ENCODE measurements at regions of chr1 and their contacts with region 1.

Region 1: DNA sequence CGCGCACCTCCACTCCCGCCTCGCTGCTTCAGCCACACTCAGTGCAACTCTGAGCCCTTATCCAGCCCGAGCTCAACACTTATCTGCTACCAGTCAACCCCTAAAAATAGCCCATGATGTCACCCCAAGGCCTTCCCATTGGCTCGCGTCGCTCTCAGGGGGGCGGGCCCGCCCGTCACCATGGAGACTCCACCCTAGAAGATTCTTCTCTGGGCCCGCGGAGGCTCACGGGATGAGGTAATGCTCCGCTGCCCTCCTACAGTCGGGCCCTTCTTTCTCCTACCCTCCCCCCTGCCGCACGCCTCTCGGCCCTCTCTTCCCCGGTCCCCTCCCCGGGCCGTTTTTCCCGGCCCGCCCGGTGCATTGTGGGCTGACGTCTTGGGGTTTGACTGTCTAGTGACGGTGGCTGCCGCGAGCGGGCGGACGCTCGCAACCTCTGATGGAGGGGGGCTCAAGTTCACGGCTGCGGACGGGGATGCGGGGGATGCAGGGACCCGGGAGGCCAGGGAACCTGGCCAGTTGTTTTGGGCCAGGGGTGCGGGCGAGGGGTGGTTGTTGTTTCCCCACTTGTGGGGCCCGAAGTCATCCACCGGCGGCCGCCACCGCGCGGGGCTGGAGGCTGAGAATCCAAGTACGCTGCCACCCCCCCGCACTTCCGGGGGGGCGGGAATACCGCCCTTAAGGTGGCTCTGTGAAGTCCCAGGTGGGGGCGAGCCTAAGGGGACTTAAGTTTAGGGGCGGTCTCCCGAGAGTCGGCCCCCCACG is at the start of gene JUN:
- DNase-seq: peak; percentile 99 to 100
- ATAC-seq: peak; percentile 85 to 95 (median 89)
- H3K4me3 ChIP-seq: peak within 1 kb of the TSS; percentile 74 to 97 (median 94)
- H3K27ac ChIP-seq: peak within 1 kb of the TSS; percentile 98 to 100 (median 100)
- H3K4me1 ChIP-seq: peaks cover 0 to 33% (median 22%) of the 10 kb centered on the region in 9 donors
- H3K27me3 ChIP-seq: no peaks in the 10 kb centered on the region
- CTCF ChIP-seq: peak in 3 of 9 donors; percentile 32 to 37 (median 34)
- total RNA-seq, gene JUN: 47.0 to 209 (median 78.8) TPM

Region 2: GRCh38 chr1:58432851-58433668 is 351.1 kb before region 1 on chr1:
- intact Hi-C with region 1: no loop called
- DNase-seq: no peak
- ATAC-seq: peak in 4 of 8 donors; percentile 24 to 67 (median 51)
- H3K4me3 ChIP-seq: no peak overlapping the region
- H3K27ac ChIP-seq: no peak overlapping the region
- H3K4me1 ChIP-seq: peaks cover 0 to 27% (median 4%) of the 10 kb centered on the region in 9 donors
- H3K27me3 ChIP-seq: no peaks in the 10 kb centered on the region
- CTCF ChIP-seq: no peak

Region 3: GRCh38 chr1:58739856-58740466 is 44.2 kb before region 1 on chr1:
- intact Hi-C with region 1: loop called in 1 of 10 experiments (anchors 5 kb)
- DNase-seq: peak in 1 of 2 donors; percentile 52
- ATAC-seq: peak in 6 of 8 donors; percentile 49 to 76 (median 64)
- H3K4me3 ChIP-seq: no peak overlapping the region
- H3K27ac ChIP-seq: no peak overlapping the region
- H3K4me1 ChIP-seq: peaks cover 0 to 24% (median 3%) of the 10 kb centered on the region in 9 donors
- H3K27me3 ChIP-seq: no peaks in the 10 kb centered on the region
- CTCF ChIP-seq: peak; percentile 73 to 95 (median 86)

Region 4: GRCh38 chr1:58982259-58982998 is 198.3 kb after region 1 on chr1:
- intact Hi-C with region 1: loop called in 2 of 10 experiments (anchors 2 to 5 kb)
- DNase-seq: peak; percentile 34 to 40
- ATAC-seq: peak; percentile 39 to 97 (median 84)
- H3K4me3 ChIP-seq: no peak overlapping the region
- H3K27ac ChIP-seq: peak overlapping the region in 9 of 10 donors; percentile 24 to 68 (median 52)
- H3K4me1 ChIP-seq: peaks cover 5 to 34% (median 27%) of the 10 kb centered on the region in 9 donors
- H3K27me3 ChIP-seq: no peaks in the 10 kb centered on the region
- CTCF ChIP-seq: no peak

Region 5: GRCh38 chr1:59076612-59077011 is 292.4 kb after region 1 on chr1:
- intact Hi-C with region 1: loop called in 1 of 10 experiments (anchors 10 kb)
- DNase-seq: no peak
- ATAC-seq: peak in 1 of 8 donors; percentile 33
- H3K4me3 ChIP-seq: no peak overlapping the region
- H3K27ac ChIP-seq: no peak overlapping the region
- H3K4me1 ChIP-seq: peaks cover 0 to 29% (median 8%) of the 10 kb centered on the region in 9 donors
- H3K27me3 ChIP-seq: no peaks in the 10 kb centered on the region
- CTCF ChIP-seq: peak in 6 of 9 donors; percentile 12 to 46 (median 31)

Region 6: GRCh38 chr1:59290193-59290947 is 506.2 kb after region 1 on chr1:
- intact Hi-C with region 1: loop called in 3 of 10 experiments (anchors 5 to 10 kb)
- DNase-seq: peak in 1 of 2 donors; percentile 15
- ATAC-seq: peak in 7 of 8 donors; percentile 18 to 74 (median 50)
- H3K4me3 ChIP-seq: no peak overlapping the region
- H3K27ac ChIP-seq: peak overlapping the region in 1 of 10 donors; percentile 91
- H3K4me1 ChIP-seq: peaks cover 0 to 43% (median 5%) of the 10 kb centered on the region in 9 donors
- H3K27me3 ChIP-seq: no peaks in the 10 kb centered on the region
- CTCF ChIP-seq: peak in 7 of 9 donors; percentile 38 to 65 (median 54)

Region 7: GRCh38 chr1:59699227-59699847 is 915.2 kb after region 1 on chr1:
- intact Hi-C with region 1: loop called in 6 of 10 experiments (anchors 1 to 10 kb)
- DNase-seq: no peak
- ATAC-seq: peak in 7 of 8 donors; percentile 34 to 67 (median 41)
- H3K4me3 ChIP-seq: no peak overlapping the region
- H3K27ac ChIP-seq: peak overlapping the region in 2 of 10 donors; percentile 19 to 68
- H3K4me1 ChIP-seq: peaks cover 6 to 58% (median 29%) of the 10 kb centered on the region in 9 donors
- H3K27me3 ChIP-seq: no peaks in the 10 kb centered on the region
- CTCF ChIP-seq: peak; percentile 90 to 98 (median 94)

Measured in heart right ventricle (tissue), 16 donors.